Activated T-helper 2 cell treated with anti-CD3 and anti-CD28 coated beads, Interferon-gamma antibody, Interleukin-2, Interleukin-4, amounts not matched to agents 10 μg/mL and 5 μg/mL and 100 μg/mL, durations not matched to agents 14 hours and 24 hours and 36 hours (primary cell): ENCODE measurements at regions of chr2 and their contacts with region 1.

Region 1: DNA sequence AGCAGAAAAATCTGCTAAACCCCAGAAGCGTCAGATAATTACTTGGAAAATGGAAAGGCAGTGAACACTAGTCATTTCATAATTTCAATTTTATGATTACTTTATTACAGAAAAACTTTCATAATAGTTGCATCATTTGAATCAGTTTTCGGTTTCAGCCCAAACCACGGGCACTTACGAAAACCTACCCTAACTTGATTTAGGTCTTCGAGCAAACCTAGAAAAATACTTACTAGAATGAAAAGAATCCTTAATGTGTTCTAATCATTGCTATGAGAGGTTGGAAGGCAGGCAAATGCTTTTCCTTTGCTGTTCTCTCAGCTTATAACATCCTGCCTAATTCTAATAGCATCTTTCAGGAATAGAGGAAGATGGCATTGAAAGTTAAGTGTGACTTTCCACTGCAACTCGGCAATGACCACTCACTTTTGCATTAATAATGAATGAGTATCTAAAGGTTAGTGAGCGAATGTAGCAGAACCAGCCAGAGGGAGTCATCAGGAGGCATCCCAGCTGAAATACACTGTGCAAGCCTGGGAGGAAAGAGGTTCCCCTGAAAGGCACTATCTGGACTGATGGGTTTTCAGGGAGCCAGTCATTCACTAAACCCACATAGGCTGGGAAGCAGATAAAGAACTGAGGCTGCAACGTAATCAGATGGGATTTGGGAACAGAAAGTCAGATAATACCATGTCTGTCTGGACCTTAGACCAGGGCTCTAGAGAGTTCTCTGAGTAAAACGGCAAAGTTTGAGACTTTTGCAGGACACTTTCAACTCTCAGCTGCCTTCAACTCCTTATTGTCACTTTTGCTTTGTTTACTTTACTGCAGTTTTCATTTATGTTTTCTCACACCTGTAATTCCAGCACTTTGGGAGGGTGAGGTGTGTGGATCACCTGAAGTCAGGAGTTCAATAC is 520.8 kb downstream of the RNF144A start:
- DNase-seq: no peak
- H3K4me3 Mint-ChIP-seq: peak overlapping the region; percentile 39
- H3K27ac Mint-ChIP-seq: peak overlapping the region; percentile 95
- H3K4me1 Mint-ChIP-seq: peaks cover 79% of the 10 kb centered on the region
- H3K27me3 Mint-ChIP-seq: no peaks in the 10 kb centered on the region

Region 2: GRCh38 chr2:7256377-7256776 is 181.6 kb before region 1 on chr2:
- intact Hi-C with region 1: no loop called
- DNase-seq: no peak
- H3K4me3 Mint-ChIP-seq: no peak overlapping the region
- H3K27ac Mint-ChIP-seq: no peak overlapping the region
- H3K4me1 Mint-ChIP-seq: no peaks in the 10 kb centered on the region
- H3K27me3 Mint-ChIP-seq: peaks cover 17% of the 10 kb centered on the region

Region 3: GRCh38 chr2:7450188-7450832 is 12.3 kb after region 1 on chr2:
- intact Hi-C with region 1: loop called (anchors 1 kb)
- DNase-seq: peak; percentile 59
- H3K4me3 Mint-ChIP-seq: peak overlapping the region; percentile 26
- H3K27ac Mint-ChIP-seq: peak overlapping the region; percentile 99
- H3K4me1 Mint-ChIP-seq: peaks cover 85% of the 10 kb centered on the region
- H3K27me3 Mint-ChIP-seq: no peaks in the 10 kb centered on the region

Region 4: DNA sequence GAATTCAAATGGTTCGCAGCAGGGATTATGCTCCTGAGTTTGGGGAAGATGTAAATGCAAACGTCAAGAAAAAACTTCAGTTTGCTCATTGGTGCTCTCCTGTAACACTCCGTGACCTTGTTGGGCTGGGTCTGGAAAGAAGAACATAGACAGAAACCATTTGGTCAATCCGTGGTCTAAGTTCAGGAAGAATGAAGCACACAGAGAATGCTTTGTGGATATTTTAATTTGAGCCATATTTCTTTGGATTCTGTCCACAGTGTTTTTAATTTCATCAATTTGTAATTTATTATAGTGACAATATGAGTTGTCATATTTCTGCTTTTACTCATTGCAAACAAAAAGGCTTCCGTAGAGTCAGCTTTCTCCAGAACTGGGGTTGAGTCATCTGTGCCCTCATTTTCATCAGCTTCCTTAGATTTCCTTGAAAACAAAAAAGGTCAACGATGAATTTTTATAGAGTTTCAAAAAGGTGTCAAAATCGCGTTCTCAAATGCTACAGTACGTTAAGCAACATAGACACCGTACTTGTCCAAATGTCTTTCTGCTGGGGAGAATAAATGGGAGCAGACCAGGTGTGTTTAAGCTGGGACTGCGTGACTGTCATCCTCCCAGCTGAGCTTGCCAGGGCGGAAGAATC is 85.6 kb after region 1 on chr2:
- intact Hi-C with region 1: loop called (anchors 2 kb)
- DNase-seq: no peak
- H3K4me3 Mint-ChIP-seq: peak overlapping the region; percentile 46
- H3K27ac Mint-ChIP-seq: peak overlapping the region; percentile 88
- H3K4me1 Mint-ChIP-seq: peaks cover 69% of the 10 kb centered on the region
- H3K27me3 Mint-ChIP-seq: no peaks in the 10 kb centered on the region

Region 5: GRCh38 chr2:7588295-7588694 is 150.3 kb after region 1 on chr2:
- intact Hi-C with region 1: loop called (anchors 2 kb)
- DNase-seq: no peak
- H3K4me3 Mint-ChIP-seq: no peak overlapping the region
- H3K27ac Mint-ChIP-seq: peak overlapping the region; percentile 66
- H3K4me1 Mint-ChIP-seq: peaks cover 42% of the 10 kb centered on the region
- H3K27me3 Mint-ChIP-seq: no peaks in the 10 kb centered on the region

Region 6: DNA sequence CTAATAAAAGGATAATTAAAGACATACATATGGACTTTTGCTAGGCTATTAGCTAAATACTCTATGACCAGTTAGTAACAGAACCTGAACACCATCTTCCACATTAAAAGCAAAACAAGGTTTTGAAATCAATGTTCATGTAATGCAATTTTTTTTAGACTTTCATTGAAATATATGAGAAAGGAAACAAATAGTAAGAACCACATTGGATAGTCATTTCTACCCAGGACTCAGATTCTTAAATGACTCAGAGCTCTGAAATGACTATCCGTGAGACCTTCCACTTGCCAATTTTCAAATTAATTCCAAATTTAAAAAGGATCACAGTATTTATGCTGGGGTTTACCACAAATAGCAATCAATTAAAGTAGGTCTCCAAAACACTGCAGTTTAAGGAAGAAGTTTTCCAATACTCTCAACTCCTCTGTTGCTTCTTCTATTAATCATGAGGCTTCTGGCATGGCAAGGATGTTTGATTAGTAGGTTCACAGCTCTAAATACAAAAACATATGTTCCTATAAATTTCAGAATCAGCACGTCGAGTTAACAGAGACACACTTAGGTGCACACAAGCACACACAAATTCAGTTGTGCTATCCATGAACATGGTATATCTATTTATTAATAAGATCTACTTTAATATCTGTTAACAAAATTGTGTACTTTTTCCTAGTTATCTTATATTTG is 320.2 kb after region 1 on chr2:
- intact Hi-C with region 1: loop called (anchors 2 kb)
- DNase-seq: no peak
- H3K4me3 Mint-ChIP-seq: no peak overlapping the region
- H3K27ac Mint-ChIP-seq: peak overlapping the region; percentile 78
- H3K4me1 Mint-ChIP-seq: peaks cover 18% of the 10 kb centered on the region
- H3K27me3 Mint-ChIP-seq: no peaks in the 10 kb centered on the region

Region 7: DNA sequence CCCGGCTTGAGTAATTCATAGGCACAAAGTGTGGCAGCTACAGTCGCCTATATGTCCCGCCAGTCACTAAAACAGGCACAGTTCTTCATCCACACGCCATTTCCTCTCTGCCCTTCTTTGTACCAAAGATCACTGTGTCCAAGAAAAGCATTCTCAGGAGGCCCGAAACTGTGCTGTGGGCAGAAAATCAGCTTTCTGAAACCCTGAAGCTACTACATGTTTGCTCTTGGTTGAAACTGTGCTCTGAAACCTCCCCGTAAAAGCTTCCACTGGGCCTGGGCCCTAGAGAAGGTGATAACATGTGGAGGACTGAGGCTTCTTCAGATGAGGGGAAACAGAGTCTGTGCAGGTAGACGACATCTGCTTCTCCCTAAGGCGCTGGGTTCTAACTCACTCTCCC is 1168.3 kb after region 1 on chr2:
- intact Hi-C with region 1: loop called (anchors 5 kb)
- DNase-seq: no peak
- H3K4me3 Mint-ChIP-seq: no peak overlapping the region
- H3K27ac Mint-ChIP-seq: peak overlapping the region; percentile 53
- H3K4me1 Mint-ChIP-seq: peaks cover 55% of the 10 kb centered on the region
- H3K27me3 Mint-ChIP-seq: peaks cover 7% of the 10 kb centered on the region